ENCODE measurements at regions of chr1 and their contacts with region 1.

Region 1: DNA sequence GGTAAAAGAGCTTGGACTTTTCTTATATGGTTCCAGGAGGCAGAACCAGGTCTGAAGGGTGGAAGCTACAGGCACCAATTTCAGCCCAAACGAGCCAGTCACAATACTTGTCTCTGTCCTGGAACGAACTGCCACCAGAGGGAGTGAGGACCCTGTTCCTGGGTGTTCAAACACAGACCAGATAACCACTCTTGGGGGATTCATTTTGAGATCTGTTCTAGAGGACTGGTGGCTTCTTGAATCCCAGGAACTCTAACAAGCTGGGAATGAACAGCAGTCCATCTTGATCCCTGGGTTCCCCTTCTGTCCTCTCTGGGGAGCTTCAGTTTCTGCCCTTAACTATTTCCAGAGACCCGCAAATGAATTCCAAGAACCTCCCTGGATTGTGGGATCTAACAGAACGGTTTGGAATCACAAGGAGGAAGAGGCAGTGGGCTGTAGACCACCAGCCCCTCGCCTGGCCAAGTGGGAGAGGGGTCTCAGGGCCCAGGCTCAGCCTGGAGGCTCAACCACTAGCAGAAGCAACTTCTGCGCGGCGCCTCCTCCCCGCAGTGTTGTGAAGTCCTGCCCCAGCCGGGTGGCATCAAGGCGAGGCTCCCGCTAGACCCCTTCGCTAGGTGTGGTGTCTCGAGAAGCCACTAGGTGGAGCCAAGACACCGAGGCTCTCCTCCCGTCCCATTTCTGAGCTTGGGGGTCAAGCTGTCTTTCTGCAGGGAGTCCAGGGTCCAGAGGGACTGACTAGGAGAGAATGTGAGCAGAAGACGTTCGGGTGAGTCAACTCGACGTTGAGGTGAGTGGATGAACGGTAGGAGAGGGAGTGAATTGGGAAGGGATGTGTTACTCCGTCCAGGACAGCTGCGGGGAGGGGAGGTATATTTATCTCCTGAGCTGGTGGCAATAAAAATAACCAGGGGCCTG is 12.1 kb upstream of the NES start:
- DNase-seq: peak; percentile 86
- ATAC-seq: peak; percentile 98
- H3K4me3 Mint-ChIP-seq: no peak overlapping the region
- H3K27ac Mint-ChIP-seq: no peak overlapping the region
- H3K4me1 Mint-ChIP-seq: peaks cover 29% of the 10 kb centered on the region
- H3K27me3 Mint-ChIP-seq: peaks cover 51% of the 10 kb centered on the region
- CTCF ChIP-seq: peak; percentile 95

Region 2: GRCh38 chr1:156625436-156626078 is 63.7 kb before region 1 on chr1:
- CTCF ChIA-PET with region 1: interaction called, 20 read pairs
- POLR2A ChIA-PET with region 1: interaction called, 3 read pairs
- intact Hi-C with region 1: no loop called
- DNase-seq: peak; percentile 74
- ATAC-seq: peak; percentile 74
- H3K4me3 Mint-ChIP-seq: peak overlapping the region; percentile 53
- H3K27ac Mint-ChIP-seq: no peak overlapping the region
- H3K4me1 Mint-ChIP-seq: peaks cover 10% of the 10 kb centered on the region
- H3K27me3 Mint-ChIP-seq: peaks cover 37% of the 10 kb centered on the region
- CTCF ChIP-seq: peak; percentile 96

Region 3: DNA sequence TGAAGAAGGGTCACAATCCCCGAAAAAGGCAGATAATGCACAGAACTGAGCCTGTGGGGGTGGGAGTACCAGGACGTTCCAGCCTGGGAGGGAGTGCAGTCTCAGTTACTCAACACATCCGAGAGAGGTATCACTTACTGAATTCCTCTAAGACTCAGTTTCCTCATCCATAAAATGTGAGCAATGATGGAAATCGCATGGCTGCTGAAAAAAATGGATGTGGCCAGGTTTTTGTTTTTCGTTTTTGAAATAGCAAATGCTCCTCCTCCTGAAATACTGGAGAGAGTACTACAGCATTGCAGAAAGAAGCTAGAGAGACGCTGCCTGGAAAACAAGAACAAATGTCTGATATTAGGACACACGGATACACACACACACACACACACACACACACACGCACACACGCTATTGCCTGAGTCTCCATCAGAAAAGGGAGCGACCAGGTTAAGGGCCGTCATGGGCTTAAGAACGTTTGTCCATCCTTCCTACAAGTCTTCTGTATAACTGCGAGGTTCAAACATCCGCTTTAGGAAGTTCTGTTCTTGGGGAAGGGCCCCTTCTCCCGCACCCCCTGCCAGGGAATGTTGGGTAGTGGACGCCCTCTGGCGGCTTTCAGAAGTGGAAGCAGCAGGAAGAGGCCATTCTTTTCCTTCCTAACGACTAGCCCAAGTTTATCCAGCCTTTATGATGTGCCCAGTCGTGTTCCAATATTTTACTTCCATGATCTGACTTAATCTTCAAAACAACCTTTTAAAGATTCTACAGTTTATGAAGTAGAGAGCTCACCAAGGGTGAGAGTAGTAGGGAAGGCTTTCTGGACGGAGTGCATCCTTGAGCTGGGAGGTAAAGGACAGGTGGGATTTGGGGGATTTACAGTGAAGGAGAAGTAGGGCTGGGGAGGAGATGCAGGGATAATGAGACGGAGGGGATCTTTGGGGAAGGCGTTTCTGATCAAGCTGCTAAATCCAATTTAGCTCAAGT is 11.4 kb before region 1 on chr1:
- CTCF ChIA-PET with region 1: interaction called, 72 read pairs
- POLR2A ChIA-PET with region 1: interaction called, 4 read pairs
- intact Hi-C with region 1: no loop called
- DNase-seq: peak; percentile 53
- ATAC-seq: peak; percentile 45
- H3K4me3 Mint-ChIP-seq: no peak overlapping the region
- H3K27ac Mint-ChIP-seq: no peak overlapping the region
- H3K4me1 Mint-ChIP-seq: peaks cover 14% of the 10 kb centered on the region
- H3K27me3 Mint-ChIP-seq: peaks cover 59% of the 10 kb centered on the region
- CTCF ChIP-seq: peak; percentile 82

Region 4: DNA sequence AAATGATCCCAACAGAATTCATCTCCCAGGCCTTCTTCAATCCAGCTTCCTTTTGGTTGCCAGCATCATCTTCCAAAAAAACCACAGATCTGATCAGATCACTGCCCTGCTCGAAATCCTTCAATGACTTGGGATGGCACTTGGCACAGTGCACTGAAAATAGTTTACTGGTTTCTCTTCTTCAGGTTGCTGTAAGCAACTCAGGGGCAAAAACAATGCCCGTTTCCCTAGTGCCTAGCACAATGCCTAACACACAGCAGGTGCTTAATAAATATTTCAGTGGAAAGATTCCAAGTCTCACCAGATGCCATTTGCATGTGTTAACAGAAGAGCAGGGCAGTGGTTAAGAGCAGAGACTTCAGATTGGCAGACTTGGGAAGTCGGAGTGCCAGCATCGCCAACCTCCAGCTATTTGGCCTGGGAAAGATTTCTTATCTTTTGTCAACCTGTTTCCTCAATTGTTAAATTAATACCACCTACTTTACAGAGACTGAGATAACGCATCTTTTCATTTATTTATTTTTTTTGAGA is 28.0 kb after region 1 on chr1:
- CTCF ChIA-PET with region 1: interaction called, 396 read pairs
- POLR2A ChIA-PET with region 1: no interaction called
- intact Hi-C with region 1: no loop called
- DNase-seq: no peak
- ATAC-seq: no peak
- H3K4me3 Mint-ChIP-seq: no peak overlapping the region
- H3K27ac Mint-ChIP-seq: no peak overlapping the region
- H3K4me1 Mint-ChIP-seq: peaks cover 13% of the 10 kb centered on the region
- H3K27me3 Mint-ChIP-seq: no peaks in the 10 kb centered on the region
- CTCF ChIP-seq: no peak

Region 5: GRCh38 chr1:156773607-156774006 is 84.3 kb after region 1 on chr1:
- CTCF ChIA-PET with region 1: interaction called, 18 read pairs
- POLR2A ChIA-PET with region 1: interaction called, 3 read pairs
- intact Hi-C with region 1: no loop called
- DNase-seq: no peak
- ATAC-seq: peak; percentile 25
- H3K4me3 Mint-ChIP-seq: no peak overlapping the region
- H3K27ac Mint-ChIP-seq: no peak overlapping the region
- H3K4me1 Mint-ChIP-seq: peaks cover 68% of the 10 kb centered on the region
- H3K27me3 Mint-ChIP-seq: no peaks in the 10 kb centered on the region
- CTCF ChIP-seq: peak; percentile 19

Region 6: GRCh38 chr1:156797212-156797871 is 108.0 kb after region 1 on chr1:
- CTCF ChIA-PET with region 1: interaction called, 18 read pairs
- POLR2A ChIA-PET with region 1: no interaction called
- intact Hi-C with region 1: no loop called
- DNase-seq: peak; percentile 77
- ATAC-seq: peak; percentile 84
- H3K4me3 Mint-ChIP-seq: no peak overlapping the region
- H3K27ac Mint-ChIP-seq: no peak overlapping the region
- H3K4me1 Mint-ChIP-seq: peaks cover 6% of the 10 kb centered on the region
- H3K27me3 Mint-ChIP-seq: no peaks in the 10 kb centered on the region
- CTCF ChIP-seq: peak; percentile 91

Region 7: DNA sequence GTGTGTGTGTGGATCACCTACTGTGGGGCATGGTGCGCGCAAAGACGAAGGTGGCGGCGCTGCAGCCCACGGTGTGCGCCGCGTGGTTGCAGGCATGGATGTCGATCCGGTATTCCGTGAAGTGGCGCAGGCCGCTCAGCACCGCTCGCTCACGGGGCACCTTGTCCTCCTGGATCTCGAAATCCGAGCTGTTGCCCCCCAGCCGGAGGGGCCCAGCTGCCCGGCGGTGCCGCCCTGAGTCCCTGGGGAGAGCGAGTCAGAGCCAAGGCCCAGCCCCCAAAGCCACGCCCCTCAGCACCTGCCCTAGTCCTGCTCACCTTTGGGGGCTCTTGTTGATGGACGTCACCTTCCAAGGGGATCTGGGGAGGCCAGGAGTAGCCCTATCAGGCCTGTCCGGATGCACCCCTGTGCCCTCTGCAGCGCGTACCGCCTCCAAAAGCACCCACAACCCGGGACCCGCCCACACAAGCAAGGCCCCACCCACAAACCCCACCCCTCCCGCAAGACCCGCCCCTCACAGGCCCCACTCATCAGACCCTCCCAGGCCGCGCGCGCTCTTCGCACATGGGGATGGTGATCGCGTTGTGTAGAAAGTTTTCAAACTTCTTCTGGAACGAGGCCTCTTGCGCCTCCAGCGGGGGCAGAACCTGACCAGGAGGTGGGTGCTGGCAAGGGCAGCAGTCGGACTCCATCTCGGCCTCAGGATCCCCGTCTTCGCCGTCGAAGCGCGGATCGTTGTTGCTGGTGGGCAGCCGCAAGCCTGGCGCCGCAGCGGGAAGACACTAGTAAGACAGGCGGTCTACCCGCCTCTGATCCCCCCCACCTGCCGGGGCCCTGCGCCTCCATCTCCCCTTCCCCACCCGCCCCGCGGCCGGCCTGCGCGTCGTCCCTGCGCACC is 156.0 kb after region 1 on chr1:
- CTCF ChIA-PET with region 1: no interaction called
- POLR2A ChIA-PET with region 1: no interaction called
- intact Hi-C with region 1: no loop called
- DNase-seq: peak; percentile 63
- ATAC-seq: peak; percentile 51
- H3K4me3 Mint-ChIP-seq: peak overlapping the region; percentile 71
- H3K27ac Mint-ChIP-seq: no peak overlapping the region
- H3K4me1 Mint-ChIP-seq: peaks cover 44% of the 10 kb centered on the region
- H3K27me3 Mint-ChIP-seq: peaks cover 62% of the 10 kb centered on the region
- CTCF ChIP-seq: no peak

Region 8: DNA sequence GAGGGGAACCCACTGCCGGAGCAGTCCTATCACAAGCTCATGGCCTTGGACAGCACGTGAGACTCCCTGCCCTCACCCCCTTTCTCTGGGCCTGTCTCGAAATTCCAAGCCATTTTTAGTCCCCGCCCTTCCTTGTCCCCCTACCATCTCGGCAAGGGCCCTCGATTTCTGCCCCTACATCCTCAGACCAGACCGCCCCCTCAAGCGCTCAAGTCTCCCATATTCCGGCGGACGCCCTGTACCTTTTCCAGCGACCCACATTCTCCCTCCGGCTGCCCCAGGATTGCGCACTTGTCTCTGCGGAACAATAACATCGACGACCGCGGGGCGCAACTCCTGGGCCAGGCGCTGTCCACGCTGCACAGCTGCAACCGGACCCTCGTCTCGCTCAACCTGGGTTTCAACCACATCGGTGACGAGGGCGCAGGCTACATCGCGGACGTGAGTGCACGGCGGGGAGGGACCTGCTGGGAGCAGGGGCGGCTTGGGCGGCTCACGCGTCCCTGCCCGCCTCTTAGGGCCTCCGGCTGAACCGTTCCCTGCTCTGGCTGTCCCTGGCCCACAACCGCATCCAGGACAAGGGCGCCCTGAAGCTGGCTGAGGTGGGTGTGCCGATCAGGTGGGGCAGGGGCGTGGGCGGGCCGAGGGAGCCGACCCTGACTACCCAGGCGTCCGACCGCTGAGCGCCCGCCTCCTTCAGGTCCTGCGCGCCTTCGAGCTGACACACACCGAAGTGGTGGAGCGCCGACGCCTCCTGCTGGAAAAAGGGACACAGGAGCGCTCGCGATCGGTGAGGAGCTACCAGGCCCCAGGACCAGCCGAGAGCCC is 238.1 kb after region 1 on chr1:
- CTCF ChIA-PET with region 1: interaction called, 22 read pairs
- POLR2A ChIA-PET with region 1: no interaction called
- intact Hi-C with region 1: no loop called
- DNase-seq: peak; percentile 83
- ATAC-seq: peak; percentile 70
- H3K4me3 Mint-ChIP-seq: peak overlapping the region; percentile 41
- H3K27ac Mint-ChIP-seq: no peak overlapping the region
- H3K4me1 Mint-ChIP-seq: peaks cover 32% of the 10 kb centered on the region
- H3K27me3 Mint-ChIP-seq: peaks cover 77% of the 10 kb centered on the region
- CTCF ChIP-seq: peak; percentile 78